Posterior vena cava (tissue), 2 donors: ENCODE measurements at regions of chr5 and their contacts with region 1.

Region 1: GRCh38 chr5:9034649-9035048 is 511.2 kb downstream of the SEMA5A start:
- DNase-seq: no peak

Region 2: GRCh38 chr5:8766448-8766847 is 268.2 kb before region 1 on chr5:
- intact Hi-C with region 1: loop called in 1 of 2 experiments (anchors 10 kb)
- DNase-seq: no peak

Region 3: GRCh38 chr5:9069650-9070049 is 35.0 kb after region 1 on chr5:
- intact Hi-C with region 1: no loop called
- DNase-seq: no peak

Region 4: GRCh38 chr5:9149988-9150387 is 115.3 kb after region 1 on chr5:
- intact Hi-C with region 1: no loop called
- DNase-seq: no peak